ENCODE measurements at regions of chr13 and their contacts with region 1.

Region 1: GRCh38 chr13:26262156-26262555 is 8.2 kb downstream of the CDK8 start:
- DNase-seq: no peak
- ATAC-seq: no peak
- H3K4me3 ChIP-seq: no peak overlapping the region
- H3K27ac ChIP-seq: no peak overlapping the region
- H3K4me1 ChIP-seq: no peaks in the 10 kb centered on the region; the same call in 1 of the 2 replicates
- H3K27me3 ChIP-seq: no peaks in the 10 kb centered on the region
- CTCF ChIP-seq: no peak

Region 2: GRCh38 chr13:25130944-25131343 is 1131.2 kb before region 1 on chr13:
- CTCF ChIA-PET with region 1: no interaction called
- POLR2A ChIA-PET with region 1: interaction called, 17 read pairs
- in situ Hi-C with region 1: no loop called
- intact Hi-C with region 1: no loop called
- DNase-seq: no peak
- ATAC-seq: no peak
- H3K4me3 ChIP-seq: no peak overlapping the region
- H3K27ac ChIP-seq: no peak overlapping the region
- H3K4me1 ChIP-seq: no peaks in the 10 kb centered on the region
- H3K27me3 ChIP-seq: no peaks in the 10 kb centered on the region
- CTCF ChIP-seq: no peak

Region 3: DNA sequence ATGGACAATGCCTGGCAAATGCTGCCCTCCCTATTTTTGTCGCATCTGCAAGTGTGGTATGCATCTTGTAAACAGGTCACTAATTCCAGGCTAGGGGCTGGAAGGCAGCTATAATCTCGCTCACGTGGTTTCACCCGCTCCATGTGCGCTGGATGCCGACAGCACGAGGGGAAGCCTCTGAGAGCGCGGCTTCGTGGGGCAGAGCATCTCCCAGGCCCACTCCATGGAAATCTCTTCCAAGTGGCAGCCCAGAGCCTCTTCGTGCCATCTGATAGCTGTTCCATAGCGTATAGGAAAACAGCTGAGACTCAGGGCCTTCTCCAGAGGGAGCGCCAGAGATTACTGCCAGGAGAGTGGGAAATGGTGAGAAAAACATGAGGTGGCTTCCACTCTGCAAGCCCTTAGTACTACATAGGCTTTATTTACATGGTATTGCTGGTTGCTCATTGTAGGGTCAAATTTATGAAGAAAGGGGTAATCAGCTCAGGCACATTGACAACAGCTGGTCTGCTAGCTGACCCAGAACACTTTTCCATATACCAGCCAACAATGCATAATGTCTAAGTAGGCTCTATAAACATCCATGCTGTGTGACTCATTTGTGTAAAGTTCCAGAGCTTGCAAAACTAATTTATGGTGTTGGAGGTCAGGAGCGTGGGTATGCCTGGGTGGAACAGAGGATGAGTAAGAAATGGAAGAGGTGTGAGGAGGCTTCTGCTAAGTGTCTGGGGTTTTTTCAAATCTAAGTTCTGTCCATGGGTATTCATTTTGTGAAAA is 375.5 kb before region 1 on chr13:
- CTCF ChIA-PET with region 1: no interaction called
- POLR2A ChIA-PET with region 1: no interaction called
- in situ Hi-C with region 1: no loop called
- intact Hi-C with region 1: no loop called
- DNase-seq: peak; percentile 10
- ATAC-seq: 0 out of 2 replicates have a peak, but pooled peaks have one; percentile 38
- H3K4me3 ChIP-seq: no peak overlapping the region
- H3K27ac ChIP-seq: no peak overlapping the region
- H3K4me1 ChIP-seq: no peaks in the 10 kb centered on the region
- H3K27me3 ChIP-seq: no peaks in the 10 kb centered on the region
- CTCF ChIP-seq: no peak

Region 4: DNA sequence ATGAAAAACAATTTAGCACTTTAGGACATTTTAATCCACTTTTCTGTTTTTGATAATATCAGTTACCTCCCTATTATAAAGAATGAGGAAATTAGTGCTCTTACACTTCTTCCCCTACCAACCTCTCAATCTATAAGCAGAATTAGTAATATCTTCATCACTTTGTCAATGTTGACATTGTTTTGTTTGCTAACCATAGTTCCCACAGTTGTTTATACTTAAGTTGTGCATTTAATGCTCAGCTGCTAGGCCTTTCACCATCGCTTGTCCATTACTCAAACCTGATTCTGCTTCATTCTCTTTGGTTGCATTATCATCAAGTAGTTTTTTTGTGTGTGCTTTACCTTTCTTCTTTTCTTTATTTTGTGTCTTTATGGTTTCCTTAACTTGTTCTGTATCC is 123.9 kb after region 1 on chr13:
- CTCF ChIA-PET with region 1: no interaction called
- POLR2A ChIA-PET with region 1: no interaction called
- in situ Hi-C with region 1: no loop called
- intact Hi-C with region 1: no loop called
- DNase-seq: peak; percentile 7
- ATAC-seq: no peak
- H3K4me3 ChIP-seq: no peak overlapping the region
- H3K27ac ChIP-seq: no peak overlapping the region
- H3K4me1 ChIP-seq: no peaks in the 10 kb centered on the region
- H3K27me3 ChIP-seq: no peaks in the 10 kb centered on the region
- CTCF ChIP-seq: no peak